AG04450 (cell line): ENCODE measurements at regions of chr1 and their contacts with region 1.

Region 1: DNA sequence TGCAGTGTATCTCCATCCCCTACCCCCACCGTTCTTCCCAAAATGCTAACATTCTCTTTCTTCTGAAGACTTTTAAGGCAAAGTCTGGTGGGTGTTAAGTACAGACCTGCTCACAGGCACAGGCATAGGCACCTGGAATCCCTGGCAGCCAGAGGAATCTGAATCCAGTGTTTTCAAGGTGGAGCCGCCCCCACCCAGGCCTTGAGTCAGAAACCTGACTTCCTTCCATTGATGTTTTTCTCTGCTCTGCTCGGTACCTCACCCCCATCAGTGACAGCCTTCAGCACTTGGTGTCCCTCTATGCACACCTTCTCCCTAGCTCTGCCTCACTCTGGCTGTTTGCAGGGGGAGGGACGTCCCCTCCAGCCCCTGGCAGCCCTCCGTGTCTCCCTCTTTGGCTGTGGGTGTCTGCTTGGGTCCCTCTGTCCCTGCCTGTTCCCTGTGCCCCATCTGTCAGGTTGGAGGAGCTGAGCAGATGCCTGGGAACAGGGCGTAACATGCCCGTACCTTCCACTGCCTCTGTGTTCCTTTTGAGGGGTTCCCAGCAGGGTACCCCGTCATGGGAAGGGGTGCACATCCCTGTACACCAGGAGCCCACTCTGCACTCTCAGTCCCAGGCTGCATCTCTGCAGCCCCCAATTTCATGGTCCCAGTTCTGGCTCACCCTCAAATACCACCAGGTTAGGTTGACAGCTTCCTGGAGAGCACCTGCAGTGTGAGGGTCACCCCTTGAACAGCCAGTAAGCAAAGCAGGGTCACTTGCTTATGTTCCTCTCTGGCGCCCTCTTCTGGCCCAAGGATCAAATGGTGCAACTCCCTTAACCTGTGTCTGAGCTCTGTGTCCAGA is 6.7 kb downstream of the NCDN start:
- DNase-seq: no peak
- H3K4me3 ChIP-seq: no peak overlapping the region
- H3K27ac ChIP-seq: peak overlapping the region; percentile 11
- H3K27me3 ChIP-seq: no peaks in the 10 kb centered on the region
- CTCF ChIP-seq: peak; percentile 83

Region 2: DNA sequence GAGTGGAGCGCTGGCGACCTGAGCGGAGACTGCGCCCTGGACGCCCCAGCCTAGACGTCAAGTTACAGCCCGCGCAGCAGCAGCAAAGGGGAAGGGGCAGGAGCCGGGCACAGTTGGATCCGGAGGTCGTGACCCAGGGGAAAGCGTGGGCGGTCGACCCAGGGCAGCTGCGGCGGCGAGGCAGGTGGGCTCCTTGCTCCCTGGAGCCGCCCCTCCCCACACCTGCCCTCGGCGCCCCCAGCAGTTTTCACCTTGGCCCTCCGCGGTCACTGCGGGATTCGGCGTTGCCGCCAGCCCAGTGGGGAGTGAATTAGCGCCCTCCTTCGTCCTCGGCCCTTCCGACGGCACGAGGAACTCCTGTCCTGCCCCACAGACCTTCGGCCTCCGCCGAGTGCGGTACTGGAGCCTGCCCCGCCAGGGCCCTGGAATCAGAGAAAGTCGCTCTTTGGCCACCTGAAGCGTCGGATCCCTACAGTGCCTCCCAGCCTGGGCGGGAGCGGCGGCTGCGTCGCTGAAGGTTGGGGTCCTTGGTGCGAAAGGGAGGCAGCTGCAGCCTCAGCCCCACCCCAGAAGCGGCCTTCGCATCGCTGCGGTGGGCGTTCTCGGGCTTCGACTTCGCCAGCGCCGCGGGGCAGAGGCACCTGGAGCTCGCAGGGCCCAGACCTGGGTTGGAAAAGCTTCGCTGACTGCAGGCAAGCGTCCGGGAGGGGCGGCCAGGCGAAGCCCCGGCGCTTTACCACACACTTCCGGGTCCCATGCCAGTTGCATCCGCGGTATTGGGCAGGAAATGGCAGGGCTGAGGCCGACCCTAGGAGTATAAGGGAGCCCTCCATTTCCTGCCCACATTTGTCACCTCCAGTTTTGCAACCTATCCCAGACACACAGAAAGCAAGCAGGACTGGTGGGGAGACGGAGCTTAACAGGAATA is 13.1 kb after region 1 on chr1:
- CTCF ChIA-PET with region 1: interaction called, 18 read pairs
- POLR2A ChIA-PET with region 1: interaction called, 3 read pairs
- DNase-seq: no peak
- H3K4me3 ChIP-seq: no peak overlapping the region
- H3K27ac ChIP-seq: no peak overlapping the region
- H3K27me3 ChIP-seq: peaks cover 49% of the 10 kb centered on the region
- CTCF ChIP-seq: no peak

Region 3: DNA sequence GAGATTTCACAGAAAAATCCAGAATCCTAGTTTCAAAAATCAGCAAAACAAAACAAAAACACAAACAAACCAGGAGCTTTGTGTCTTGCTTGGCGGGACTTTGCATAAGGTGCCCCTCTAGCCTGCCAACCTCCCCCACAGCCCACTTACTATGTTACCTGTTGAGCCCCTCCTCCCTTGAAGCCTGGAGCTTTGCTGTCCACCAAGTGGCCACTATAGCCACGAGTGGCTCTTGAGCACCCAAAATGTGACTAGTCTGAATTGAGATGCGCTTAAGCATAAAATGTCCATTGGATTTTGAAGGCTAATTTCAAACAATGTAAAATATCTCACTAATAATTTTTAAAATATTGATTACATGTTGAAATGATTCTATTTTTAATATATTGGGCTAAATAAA is 21.0 kb after region 1 on chr1:
- CTCF ChIA-PET with region 1: interaction called, 18 read pairs
- POLR2A ChIA-PET with region 1: no interaction called
- DNase-seq: no peak
- H3K4me3 ChIP-seq: no peak overlapping the region
- H3K27ac ChIP-seq: no peak overlapping the region
- H3K27me3 ChIP-seq: no peaks in the 10 kb centered on the region
- CTCF ChIP-seq: no peak

Region 4: DNA sequence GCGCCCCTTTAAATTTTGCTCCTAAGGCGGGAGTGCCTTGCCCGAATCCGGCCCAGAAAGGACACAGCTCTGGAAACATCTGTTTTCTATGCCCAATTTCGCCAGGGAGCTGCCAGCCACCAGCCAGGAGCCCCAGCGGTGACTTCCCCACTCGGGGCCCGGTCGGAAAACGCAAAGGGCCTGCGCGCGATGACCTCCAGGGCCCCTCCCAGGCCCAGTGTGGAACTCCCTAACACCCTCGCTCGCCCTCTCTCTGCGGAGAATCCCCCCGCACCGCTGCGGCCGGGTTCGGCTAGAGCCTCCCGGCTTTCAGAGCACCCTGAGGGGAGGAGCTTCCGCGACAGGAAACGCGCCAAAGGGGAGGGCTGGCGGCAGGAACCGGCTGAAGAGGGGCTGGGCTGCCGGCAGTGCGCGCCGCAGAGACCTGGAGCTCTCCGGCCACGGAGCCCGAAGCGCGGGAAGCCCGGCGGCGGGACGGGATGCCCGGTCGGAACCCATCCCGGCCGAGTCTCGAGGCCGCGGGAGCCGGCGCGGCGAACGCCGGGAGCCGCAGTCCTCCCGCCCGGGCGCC is 205.0 kb after region 1 on chr1:
- CTCF ChIA-PET with region 1: interaction called, 28 read pairs
- POLR2A ChIA-PET with region 1: no interaction called
- DNase-seq: peak; percentile 55
- H3K4me3 ChIP-seq: peak overlapping the region; percentile 78
- H3K27ac ChIP-seq: peak overlapping the region; percentile 70
- H3K27me3 ChIP-seq: no peaks in the 10 kb centered on the region
- CTCF ChIP-seq: peak; percentile 36

Region 5: GRCh38 chr1:35777109-35777508 is 212.8 kb after region 1 on chr1:
- CTCF ChIA-PET with region 1: interaction called, 36 read pairs
- POLR2A ChIA-PET with region 1: no interaction called
- DNase-seq: no peak
- H3K4me3 ChIP-seq: no peak overlapping the region
- H3K27ac ChIP-seq: no peak overlapping the region
- H3K27me3 ChIP-seq: no peaks in the 10 kb centered on the region
- CTCF ChIP-seq: no peak

Region 6: DNA sequence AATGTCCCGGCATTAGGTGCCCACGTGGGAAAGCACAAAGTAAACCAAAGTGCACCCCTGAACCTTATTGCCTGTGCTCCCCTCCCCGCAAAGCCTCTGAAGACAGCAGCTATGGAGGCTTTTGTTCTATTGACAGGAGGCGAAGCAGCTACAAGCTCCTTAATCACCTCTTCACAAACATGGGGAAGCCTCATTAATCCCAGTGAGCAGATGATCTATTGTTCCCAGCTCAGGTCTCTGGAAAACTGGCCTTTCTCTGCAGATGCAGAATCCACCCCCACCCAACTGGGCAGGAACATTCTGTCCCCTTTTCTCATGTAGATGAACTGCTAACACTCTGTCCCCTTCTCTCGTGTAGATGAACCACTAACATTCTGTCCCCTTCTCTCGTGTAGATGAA is 1108.9 kb after region 1 on chr1:
- CTCF ChIA-PET with region 1: no interaction called
- POLR2A ChIA-PET with region 1: no interaction called
- DNase-seq: no peak
- H3K4me3 ChIP-seq: no peak overlapping the region
- H3K27ac ChIP-seq: no peak overlapping the region
- H3K27me3 ChIP-seq: peaks cover 3% of the 10 kb centered on the region
- CTCF ChIP-seq: no peak